AG04449 (cell line): ENCODE measurements at regions of chr17 and their contacts with region 1.

Region 1: DNA sequence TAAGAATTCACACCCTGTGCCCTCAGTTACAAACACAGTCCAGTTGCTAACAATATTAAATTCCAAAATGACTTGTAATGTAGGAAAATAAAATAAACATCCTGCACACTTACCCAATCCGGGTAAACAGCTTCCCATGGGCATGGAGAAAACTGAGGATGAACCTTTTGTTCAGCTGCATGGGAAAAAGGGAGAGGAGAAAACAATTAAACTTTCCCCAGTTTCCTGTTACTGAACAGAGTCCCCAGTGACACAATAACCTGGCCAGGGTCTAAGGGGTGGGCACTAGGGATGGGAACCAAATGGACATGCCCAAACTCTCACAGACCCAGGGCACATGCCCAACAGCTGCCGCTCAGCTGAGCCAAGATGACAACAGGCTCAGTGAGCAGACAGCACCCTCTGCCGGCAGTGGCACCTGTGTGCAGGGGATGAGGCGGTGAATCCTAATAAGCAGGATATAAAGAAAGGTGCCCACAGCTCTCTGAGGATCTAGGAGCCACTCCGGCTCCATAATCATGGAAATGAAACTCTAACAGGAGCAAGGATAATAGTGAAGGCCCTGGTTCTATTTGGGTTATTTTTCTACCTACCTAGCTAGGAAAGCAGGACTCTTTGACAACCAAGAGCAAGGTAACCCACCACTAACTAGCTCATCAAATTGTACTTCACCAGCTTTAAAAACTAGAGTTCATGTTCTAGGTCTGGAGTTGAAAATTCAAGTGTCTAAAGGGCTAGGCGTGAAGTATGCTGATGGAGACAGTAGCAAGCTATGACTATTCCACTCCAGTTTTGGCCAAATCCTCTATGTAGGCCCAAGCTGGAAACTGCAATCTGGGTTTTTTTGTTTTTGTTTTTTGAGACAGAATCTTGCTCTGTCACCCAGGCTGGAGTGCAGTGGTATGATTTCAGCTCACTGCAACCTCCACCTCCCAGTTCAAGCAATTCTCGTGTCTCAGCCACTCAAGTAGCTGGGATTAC is 58.8 kb downstream of the SMG6 start:
- DNase-seq: no peak
- H3K4me3 ChIP-seq: no peak overlapping the region
- CTCF ChIP-seq: peak; percentile 97

Region 2: GRCh38 chr17:2064980-2065785 is 179.7 kb before region 1 on chr17:
- CTCF ChIA-PET with region 1: interaction called, 348 read pairs
- POLR2A ChIA-PET with region 1: interaction called, 11 read pairs
- DNase-seq: no peak
- H3K4me3 ChIP-seq: no peak overlapping the region
- CTCF ChIP-seq: peak; percentile 63

Region 3: DNA sequence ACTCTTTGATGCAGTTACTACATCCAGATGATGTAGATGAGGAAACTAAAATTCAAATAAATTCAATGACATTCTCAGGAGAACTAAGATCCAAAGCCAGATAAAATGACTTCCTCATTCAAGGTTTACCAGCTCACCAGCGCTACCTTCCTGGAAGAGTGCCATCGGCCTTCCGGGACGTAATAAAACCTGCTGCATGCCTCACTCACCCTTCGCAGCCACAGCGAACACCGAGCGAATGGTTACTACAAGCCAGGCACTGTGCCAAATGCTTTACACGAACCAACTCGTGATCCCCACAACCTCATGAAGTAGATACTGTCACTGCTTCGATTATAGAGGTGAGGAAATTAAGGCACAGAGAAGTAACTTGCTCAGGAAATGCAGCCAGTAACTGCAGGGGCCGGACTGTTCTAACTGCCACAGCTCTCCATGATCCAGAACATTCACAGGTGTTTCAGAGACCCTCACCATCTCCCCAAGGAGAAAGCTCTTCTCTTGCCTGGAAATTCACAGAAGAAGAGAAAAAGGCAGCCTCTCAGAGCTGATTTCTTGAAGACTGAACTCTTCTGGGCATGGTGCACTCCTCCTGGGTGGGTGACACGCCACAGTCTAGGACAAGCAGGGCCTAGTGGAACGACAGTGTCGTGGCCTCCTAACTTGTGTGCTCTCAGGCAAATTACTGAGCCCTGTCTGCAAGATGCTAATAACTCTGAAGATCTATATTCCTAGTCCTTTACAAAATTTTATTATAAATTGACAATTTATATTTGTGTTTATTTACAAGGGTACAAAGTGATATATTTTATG is 143.2 kb before region 1 on chr17:
- CTCF ChIA-PET with region 1: interaction called, 21 read pairs
- POLR2A ChIA-PET with region 1: no interaction called
- DNase-seq: no peak
- H3K4me3 ChIP-seq: no peak overlapping the region
- CTCF ChIP-seq: no peak

Region 4: GRCh38 chr17:2157675-2158395 is 87.0 kb before region 1 on chr17:
- CTCF ChIA-PET with region 1: interaction called, 11 read pairs
- POLR2A ChIA-PET with region 1: no interaction called
- DNase-seq: peak; percentile 84
- H3K4me3 ChIP-seq: no peak overlapping the region
- CTCF ChIP-seq: no peak

Region 5: GRCh38 chr17:2259769-2260536 is 15.1 kb after region 1 on chr17:
- CTCF ChIA-PET with region 1: interaction called, 11 read pairs
- POLR2A ChIA-PET with region 1: interaction called, 4 read pairs
- DNase-seq: no peak
- H3K4me3 ChIP-seq: no peak overlapping the region
- CTCF ChIP-seq: no peak

Region 6: GRCh38 chr17:2435181-2435741 is 190.4 kb after region 1 on chr17:
- CTCF ChIA-PET with region 1: no interaction called
- POLR2A ChIA-PET with region 1: no interaction called
- DNase-seq: no peak
- H3K4me3 ChIP-seq: no peak overlapping the region
- CTCF ChIP-seq: no peak